HCT116 (cell line): ENCODE measurements at regions of chr18 and their contacts with region 1.

Region 1: DNA sequence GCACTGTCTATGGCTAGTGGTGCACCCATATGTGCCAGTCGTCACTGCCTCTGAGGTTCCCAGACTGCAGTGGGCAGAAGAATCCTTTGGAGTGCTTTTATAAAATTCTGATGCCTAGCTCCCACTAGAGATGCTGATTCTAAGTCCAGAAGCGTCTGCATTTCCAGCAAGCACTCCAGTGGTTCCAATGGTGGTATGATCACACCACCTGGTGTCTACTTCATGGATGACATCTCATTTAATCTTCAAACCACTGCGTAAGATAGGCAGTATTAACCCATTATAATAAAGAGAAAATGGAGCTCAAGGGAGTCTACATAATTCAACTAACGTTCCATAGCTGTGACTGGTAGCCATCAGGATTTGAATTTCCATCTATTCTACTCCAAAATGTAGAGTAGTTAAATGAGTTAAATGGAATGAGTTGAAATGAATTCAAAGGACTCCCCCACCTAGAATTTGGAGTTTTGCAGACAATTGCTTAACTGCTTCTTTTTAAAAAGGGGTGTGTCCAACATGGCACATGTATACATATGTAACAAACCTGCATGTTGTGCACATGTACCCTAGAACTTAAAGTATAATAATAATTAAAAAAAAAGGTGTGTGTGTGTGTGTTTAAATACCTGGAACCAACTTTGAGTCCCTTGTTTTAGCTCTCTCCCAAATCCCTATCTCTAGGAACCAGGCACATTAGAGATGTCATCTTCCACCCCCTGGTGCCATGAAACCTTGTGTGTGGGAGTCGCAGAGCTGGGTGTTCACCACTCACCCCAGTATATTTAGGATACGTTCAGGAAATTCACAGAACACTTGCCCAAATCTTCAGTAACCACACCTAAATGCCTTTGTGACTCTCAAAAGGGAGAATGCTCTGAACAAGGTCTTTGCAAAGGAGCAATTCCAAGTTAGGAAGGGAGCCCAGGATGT is 14.1 kb downstream of the LAMA3 start:
- DNase-seq: peak; percentile 71
- ATAC-seq: peak; percentile 96
- H3K4me3 ChIP-seq: no peak overlapping the region
- H3K27ac ChIP-seq: no peak overlapping the region
- H3K4me1 ChIP-seq: peaks cover 11 to 19% of the 10 kb centered on the region in 2 experiments
- H3K27me3 ChIP-seq: no peaks in the 10 kb centered on the region
- CTCF ChIP-seq: peak; percentile 53 to 94 (median 75)
- POLR2A ChIP-seq: no peak
- RAD21 ChIP-seq: peak; percentile 98

Region 2: GRCh38 chr18:23131693-23132319 is 571.5 kb before region 1 on chr18:
- CTCF ChIA-PET with region 1: interaction called, 14 read pairs
- POLR2A ChIA-PET with region 1: no interaction called
- RAD21 ChIA-PET with region 1: no interaction called
- intact Hi-C with region 1: no loop called
- DNase-seq: peak; percentile 73
- ATAC-seq: peak; percentile 43
- H3K4me3 ChIP-seq: no peak overlapping the region
- H3K27ac ChIP-seq: no peak overlapping the region
- H3K4me1 ChIP-seq: peaks cover 18 to 34% of the 10 kb centered on the region in 2 experiments
- H3K27me3 ChIP-seq: no peaks in the 10 kb centered on the region
- CTCF ChIP-seq: peak; percentile 71 to 83 (median 77)
- POLR2A ChIP-seq: no peak
- RAD21 ChIP-seq: peak; percentile 82

Region 3: DNA sequence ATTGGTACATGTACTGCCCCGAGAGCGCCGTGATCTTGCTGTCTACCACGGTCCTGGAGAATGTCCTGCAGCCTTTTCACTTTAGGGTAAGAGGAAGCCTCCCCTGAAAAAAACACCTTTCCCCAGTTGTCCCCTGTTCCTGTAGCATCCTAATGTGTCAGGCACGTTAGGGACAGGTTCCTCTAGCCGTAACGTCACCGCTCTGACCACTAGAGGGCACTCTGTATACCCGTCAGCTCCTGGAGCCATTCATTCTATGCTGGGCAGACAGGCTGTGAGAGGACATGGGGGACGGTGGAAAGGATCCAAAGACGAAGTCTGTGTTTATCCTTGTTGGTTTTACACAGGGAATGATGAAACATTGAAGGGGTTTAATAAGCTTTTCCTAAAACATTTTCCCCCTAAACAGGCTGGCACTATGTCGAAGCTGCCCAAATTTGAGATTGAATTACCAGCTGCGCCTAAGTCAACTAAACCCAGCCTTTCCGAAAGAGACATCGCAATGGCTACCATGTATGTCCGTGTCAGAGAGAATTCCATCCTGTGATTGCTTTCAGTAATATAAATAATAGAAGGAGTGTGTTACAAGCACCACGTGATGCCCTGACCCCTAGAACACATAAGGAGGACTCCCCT is 187.3 kb before region 1 on chr18:
- CTCF ChIA-PET with region 1: interaction called, 38 read pairs
- POLR2A ChIA-PET with region 1: interaction called, 3 read pairs
- RAD21 ChIA-PET with region 1: interaction called in 1 of 2 experiments, 3 read pairs
- intact Hi-C with region 1: loop called (anchors 2 kb)
- DNase-seq: peak; percentile 57
- ATAC-seq: peak; percentile 100
- H3K4me3 ChIP-seq: no peak overlapping the region
- H3K27ac ChIP-seq: no peak overlapping the region
- H3K4me1 ChIP-seq: 0 out of 4 replicates have a peak, but pooled peaks cover 0 to 2% of the 10 kb centered on the region in 2 experiments
- H3K27me3 ChIP-seq: no peaks in the 10 kb centered on the region
- CTCF ChIP-seq: peak; percentile 72 to 96 (median 96); a peak in 5 of 6 replicates
- POLR2A ChIP-seq: no peak
- RAD21 ChIP-seq: peak; percentile 78

Region 4: DNA sequence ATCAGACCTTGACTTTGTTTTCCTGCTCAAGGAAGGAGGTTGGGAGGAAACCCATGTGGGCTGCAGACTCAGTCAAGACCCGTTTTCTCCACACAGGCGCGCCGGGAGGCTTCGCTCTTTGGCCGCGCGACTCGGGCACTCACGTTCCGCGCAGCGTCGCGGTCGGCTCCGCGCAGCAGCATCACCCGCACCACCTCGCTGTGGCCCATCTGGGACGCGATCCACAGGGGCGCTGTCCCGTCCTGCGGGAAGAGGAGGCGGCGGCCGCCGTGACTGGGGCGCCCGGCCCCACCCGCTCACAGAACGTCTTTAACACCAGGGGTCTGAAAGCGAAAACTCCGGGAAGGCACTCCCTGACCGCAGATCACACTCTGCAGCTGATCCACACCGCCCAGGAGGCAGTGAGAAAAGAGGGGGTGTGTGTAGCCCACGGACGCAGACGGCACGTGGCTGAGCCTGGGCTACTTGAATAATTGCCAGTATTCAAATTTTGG is 83.9 kb before region 1 on chr18:
- CTCF ChIA-PET with region 1: interaction called, 178 read pairs
- POLR2A ChIA-PET with region 1: interaction called, 8 read pairs
- RAD21 ChIA-PET with region 1: interaction called, 27 to 28 read pairs
- intact Hi-C with region 1: loop called (anchors 1 kb)
- DNase-seq: no peak
- ATAC-seq: no peak
- H3K4me3 ChIP-seq: no peak overlapping the region
- H3K27ac ChIP-seq: no peak overlapping the region
- H3K4me1 ChIP-seq: no peaks in the 10 kb centered on the region
- H3K27me3 ChIP-seq: no peaks in the 10 kb centered on the region
- CTCF ChIP-seq: no peak
- POLR2A ChIP-seq: no peak
- RAD21 ChIP-seq: no peak

Region 5: GRCh38 chr18:23635283-23636070 is 67.8 kb before region 1 on chr18:
- CTCF ChIA-PET with region 1: interaction called, 178 read pairs
- POLR2A ChIA-PET with region 1: no interaction called
- RAD21 ChIA-PET with region 1: interaction called, 5 to 8 read pairs
- intact Hi-C with region 1: no loop called
- DNase-seq: peak; percentile 77
- ATAC-seq: peak; percentile 78
- H3K4me3 ChIP-seq: peak overlapping the region in 1 of 2 experiments; percentile 17; a peak in 2 of 4 replicates
- H3K27ac ChIP-seq: peak overlapping the region; percentile 52
- H3K4me1 ChIP-seq: peaks cover 30 to 37% of the 10 kb centered on the region in 2 experiments
- H3K27me3 ChIP-seq: no peaks in the 10 kb centered on the region
- CTCF ChIP-seq: no peak
- POLR2A ChIP-seq: no peak
- RAD21 ChIP-seq: no peak

Region 6: GRCh38 chr18:23689031-23689615 is 14.2 kb before region 1 on chr18 and contains the start of gene LAMA3:
- CTCF ChIA-PET with region 1: interaction called, 39 read pairs
- POLR2A ChIA-PET with region 1: interaction called, 5 read pairs
- RAD21 ChIA-PET with region 1: interaction called in 1 of 2 experiments, 6 read pairs
- intact Hi-C with region 1: no loop called
- DNase-seq: no peak
- ATAC-seq: peak; percentile 90
- H3K4me3 ChIP-seq: peak within 1 kb of the TSS; percentile 28 to 58
- H3K27ac ChIP-seq: no peak within 1 kb of the TSS; the same call in 1 of the 2 replicates
- H3K4me1 ChIP-seq: peaks cover 11 to 26% of the 10 kb centered on the region in 2 experiments
- H3K27me3 ChIP-seq: no peaks in the 10 kb centered on the region
- CTCF ChIP-seq: 0 out of 6 replicates have a peak, but pooled peaks of 1 of the 3 experiments have one; percentile 9
- POLR2A ChIP-seq: no peak
- RAD21 ChIP-seq: 0 out of 2 replicates have a peak, but pooled peaks have one; percentile 25
- total RNA-seq, gene LAMA3: 5.6 TPM

Region 7: GRCh38 chr18:24118750-24119577 is 415.6 kb after region 1 on chr18:
- CTCF ChIA-PET with region 1: no interaction called
- POLR2A ChIA-PET with region 1: no interaction called
- RAD21 ChIA-PET with region 1: no interaction called
- intact Hi-C with region 1: loop called (anchors 10 kb)
- DNase-seq: peak; percentile 63
- ATAC-seq: peak; percentile 84
- H3K4me3 ChIP-seq: no peak overlapping the region
- H3K27ac ChIP-seq: no peak overlapping the region
- H3K4me1 ChIP-seq: peaks cover under 1% of the 10 kb centered on the region in 2 experiments; a peak in 3 of 4 replicates
- H3K27me3 ChIP-seq: no peaks in the 10 kb centered on the region
- CTCF ChIP-seq: peak; percentile 73 to 80 (median 76)
- POLR2A ChIP-seq: no peak
- RAD21 ChIP-seq: peak; percentile 90